B cell (primary cell): ENCODE measurements at regions of chr14 and their contacts with region 1.

Region 1: DNA sequence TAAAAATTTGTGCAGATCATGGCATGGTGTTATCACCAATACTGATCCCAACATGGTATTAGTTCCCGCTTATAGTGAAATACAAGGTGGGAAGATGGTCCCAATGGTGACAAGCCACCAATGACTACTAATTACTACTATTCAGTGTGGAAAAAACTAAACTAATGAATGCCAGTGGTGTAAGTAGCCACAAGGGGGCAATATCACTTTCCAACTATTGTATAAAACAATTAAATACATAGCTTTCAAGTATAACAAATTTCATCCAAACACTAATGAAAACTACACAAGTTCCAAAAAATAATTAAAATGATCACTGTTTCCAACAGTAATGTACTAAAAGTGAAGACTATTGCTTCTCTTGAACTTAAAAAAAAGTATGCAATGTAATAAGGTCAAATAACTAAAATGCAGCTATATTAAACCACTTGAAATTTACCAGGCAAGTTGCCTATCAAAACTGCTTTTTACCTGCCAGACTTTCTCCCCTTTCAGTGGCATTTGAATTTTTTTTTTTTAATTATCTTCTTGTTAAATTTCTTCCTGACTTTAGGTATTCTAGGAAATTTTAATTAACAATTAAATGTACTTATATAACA is 58.0 kb downstream of the PAPLN start:
- DNase-seq: peak; percentile 72
- ATAC-seq: peak; percentile 53
- H3K4me3 ChIP-seq: no peak overlapping the region
- H3K4me3 Mint-ChIP-seq: no peak overlapping the region
- H3K27ac ChIP-seq: no peak overlapping the region
- H3K27ac Mint-ChIP-seq: no peak overlapping the region
- H3K4me1 ChIP-seq: no peaks in the 10 kb centered on the region
- H3K4me1 Mint-ChIP-seq: peaks cover 5% of the 10 kb centered on the region
- H3K27me3 ChIP-seq: no peaks in the 10 kb centered on the region
- H3K27me3 Mint-ChIP-seq: no peaks in the 10 kb centered on the region
- CTCF ChIP-seq: peak; percentile 89

Region 2: GRCh38 chr14:72463291-72463866 is 831.9 kb before region 1 on chr14:
- CTCF ChIA-PET with region 1: no interaction called
- POLR2A ChIA-PET with region 1: no interaction called
- intact Hi-C with region 1: no loop called
- DNase-seq: no peak
- ATAC-seq: no peak
- H3K4me3 ChIP-seq: no peak overlapping the region
- H3K4me3 Mint-ChIP-seq: no peak overlapping the region
- H3K27ac ChIP-seq: no peak overlapping the region
- H3K27ac Mint-ChIP-seq: no peak overlapping the region
- H3K4me1 ChIP-seq: no peaks in the 10 kb centered on the region
- H3K4me1 Mint-ChIP-seq: no peaks in the 10 kb centered on the region
- H3K27me3 ChIP-seq: no peaks in the 10 kb centered on the region
- H3K27me3 Mint-ChIP-seq: peaks cover 26% of the 10 kb centered on the region
- CTCF ChIP-seq: no peak

Region 3: DNA sequence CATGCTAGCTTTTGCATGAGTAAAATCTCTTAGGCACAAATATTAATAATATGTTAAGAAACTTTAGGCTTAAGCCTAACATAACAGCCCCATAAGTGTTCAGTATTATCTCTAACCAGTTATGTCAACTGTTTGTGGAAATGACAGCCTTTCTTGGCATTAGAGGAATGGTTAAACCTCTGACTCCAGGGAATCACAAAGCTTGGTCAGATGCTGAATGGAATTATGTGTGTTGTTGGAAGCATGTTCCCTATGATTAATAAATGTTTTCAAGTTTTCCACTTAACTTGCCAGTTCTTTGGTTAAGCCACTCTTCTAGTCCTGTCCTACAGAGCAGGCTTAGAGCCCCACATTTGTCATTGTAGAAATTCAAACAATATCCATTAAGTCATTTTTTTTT is 142.0 kb before region 1 on chr14:
- CTCF ChIA-PET with region 1: no interaction called
- POLR2A ChIA-PET with region 1: no interaction called
- intact Hi-C with region 1: no loop called
- DNase-seq: no peak
- ATAC-seq: no peak
- H3K4me3 ChIP-seq: no peak overlapping the region
- H3K4me3 Mint-ChIP-seq: no peak overlapping the region
- H3K27ac ChIP-seq: no peak overlapping the region
- H3K27ac Mint-ChIP-seq: no peak overlapping the region
- H3K4me1 ChIP-seq: no peaks in the 10 kb centered on the region
- H3K4me1 Mint-ChIP-seq: no peaks in the 10 kb centered on the region
- H3K27me3 ChIP-seq: no peaks in the 10 kb centered on the region
- H3K27me3 Mint-ChIP-seq: no peaks in the 10 kb centered on the region
- CTCF ChIP-seq: no peak

Region 4: DNA sequence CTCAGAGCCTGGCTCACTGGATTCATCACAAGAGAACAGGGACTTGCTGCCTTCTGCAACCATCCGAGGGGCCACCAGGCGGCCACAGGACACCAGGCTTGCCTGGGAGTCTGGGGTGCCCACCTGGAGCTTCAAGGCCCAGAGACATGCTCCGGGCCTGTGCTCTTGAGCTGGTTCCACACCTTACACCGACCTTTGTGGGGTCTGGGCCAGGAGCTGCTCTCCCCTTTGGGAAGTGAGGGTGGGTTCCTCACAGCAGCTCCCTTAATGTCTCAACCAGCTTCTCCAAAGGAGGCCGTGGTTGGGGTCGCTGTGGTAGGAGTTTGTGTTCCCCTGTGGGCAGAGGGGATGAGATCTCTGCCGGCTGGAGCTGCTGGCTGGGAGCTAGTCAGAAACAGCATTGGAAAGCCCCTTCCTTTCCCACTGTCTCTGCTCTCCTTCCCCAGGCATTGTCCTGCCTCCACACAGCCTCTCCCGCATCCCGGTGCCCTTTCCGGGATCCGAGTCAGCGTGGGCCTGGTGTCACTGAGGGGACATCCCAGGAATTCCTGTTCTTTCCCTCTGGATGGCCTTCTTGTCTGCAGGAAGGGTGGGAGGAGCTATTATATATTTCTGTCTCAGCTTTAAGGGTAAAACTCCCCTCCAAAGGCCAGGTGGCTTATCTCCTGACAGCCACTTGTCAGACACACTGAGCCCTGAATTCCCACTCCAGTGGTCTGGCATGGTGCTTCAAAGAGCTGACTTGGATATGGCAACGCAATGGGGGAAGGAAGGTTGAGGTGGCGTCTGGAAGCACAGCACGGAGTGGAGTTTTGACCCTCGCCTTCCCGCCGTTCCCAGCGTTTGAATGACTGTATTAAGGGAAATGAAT is 63.1 kb before region 1 on chr14:
- CTCF ChIA-PET with region 1: interaction called, 13 read pairs
- POLR2A ChIA-PET with region 1: no interaction called
- intact Hi-C with region 1: no loop called
- DNase-seq: peak; percentile 35
- ATAC-seq: peak; percentile 24
- H3K4me3 ChIP-seq: no peak overlapping the region
- H3K4me3 Mint-ChIP-seq: no peak overlapping the region
- H3K27ac ChIP-seq: no peak overlapping the region
- H3K27ac Mint-ChIP-seq: no peak overlapping the region
- H3K4me1 ChIP-seq: peaks cover 8 to 12% of the 10 kb centered on the region in 2 donors
- H3K4me1 Mint-ChIP-seq: peaks cover 16% of the 10 kb centered on the region
- H3K27me3 ChIP-seq: peaks cover 0 to 49% (median 14%) of the 10 kb centered on the region in 4 experiments
- H3K27me3 Mint-ChIP-seq: peaks cover 33% of the 10 kb centered on the region
- CTCF ChIP-seq: peak; percentile 42

Region 5: GRCh38 chr14:73311708-73312030 is 16.4 kb after region 1 on chr14:
- CTCF ChIA-PET with region 1: interaction called, 14 read pairs
- POLR2A ChIA-PET with region 1: no interaction called
- intact Hi-C with region 1: no loop called
- DNase-seq: no peak
- ATAC-seq: no peak
- H3K4me3 ChIP-seq: no peak overlapping the region
- H3K4me3 Mint-ChIP-seq: no peak overlapping the region
- H3K27ac ChIP-seq: peak overlapping the region in 1 of 2 donors; percentile 31
- H3K27ac Mint-ChIP-seq: peak overlapping the region; percentile 34
- H3K4me1 ChIP-seq: peaks cover 8 to 12% of the 10 kb centered on the region in 2 donors
- H3K4me1 Mint-ChIP-seq: peaks cover 12% of the 10 kb centered on the region
- H3K27me3 ChIP-seq: no peaks in the 10 kb centered on the region
- H3K27me3 Mint-ChIP-seq: no peaks in the 10 kb centered on the region
- CTCF ChIP-seq: no peak

Region 6: DNA sequence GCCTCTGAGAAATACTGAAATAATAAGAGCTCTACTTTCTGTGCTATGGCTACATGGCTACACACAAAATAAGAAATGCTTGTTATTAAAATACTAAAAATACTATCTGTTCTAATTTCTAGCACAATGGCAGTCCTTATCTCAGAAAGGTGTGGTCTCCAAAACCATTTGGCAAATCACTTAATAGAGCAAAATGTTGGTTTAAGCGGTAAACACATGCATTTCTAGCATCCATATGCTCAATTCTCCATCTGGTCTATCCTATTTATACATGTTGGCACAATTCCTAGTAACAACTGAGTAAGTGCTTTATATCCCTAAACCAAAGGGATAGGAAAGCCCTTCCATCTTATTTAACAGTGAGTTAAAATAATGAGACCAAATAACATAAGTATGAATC is 49.0 kb after region 1 on chr14:
- CTCF ChIA-PET with region 1: interaction called, 10 read pairs
- POLR2A ChIA-PET with region 1: no interaction called
- intact Hi-C with region 1: no loop called
- DNase-seq: no peak
- ATAC-seq: no peak
- H3K4me3 ChIP-seq: no peak overlapping the region
- H3K4me3 Mint-ChIP-seq: no peak overlapping the region
- H3K27ac ChIP-seq: no peak overlapping the region
- H3K27ac Mint-ChIP-seq: no peak overlapping the region
- H3K4me1 ChIP-seq: no peaks in the 10 kb centered on the region
- H3K4me1 Mint-ChIP-seq: peaks cover 6% of the 10 kb centered on the region
- H3K27me3 ChIP-seq: no peaks in the 10 kb centered on the region
- H3K27me3 Mint-ChIP-seq: no peaks in the 10 kb centered on the region
- CTCF ChIP-seq: no peak

Region 7: DNA sequence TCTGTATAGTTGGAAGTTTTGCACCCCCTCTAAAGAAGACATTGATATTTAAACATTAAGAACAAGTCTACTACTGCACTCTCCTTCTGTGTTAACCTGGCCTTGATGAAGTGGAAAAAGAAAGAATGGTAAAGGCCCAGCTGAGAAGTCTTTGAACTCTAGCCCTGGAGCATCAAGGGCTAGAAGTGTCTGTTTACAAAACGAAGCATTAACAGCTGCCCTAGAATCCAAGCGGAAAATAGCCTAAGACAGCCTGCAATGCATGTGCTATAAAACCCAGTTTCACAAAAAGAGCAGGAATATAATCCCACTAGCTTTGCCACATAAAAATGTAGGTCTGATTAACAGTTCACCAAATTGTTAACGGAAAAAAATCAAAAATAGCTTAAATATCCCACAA is 102.5 kb after region 1 on chr14:
- CTCF ChIA-PET with region 1: interaction called, 24 read pairs
- POLR2A ChIA-PET with region 1: no interaction called
- intact Hi-C with region 1: no loop called
- DNase-seq: no peak
- ATAC-seq: no peak
- H3K4me3 ChIP-seq: no peak overlapping the region
- H3K4me3 Mint-ChIP-seq: no peak overlapping the region
- H3K27ac ChIP-seq: no peak overlapping the region
- H3K27ac Mint-ChIP-seq: peak overlapping the region; percentile 0
- H3K4me1 ChIP-seq: peaks cover 29 to 46% of the 10 kb centered on the region in 2 donors
- H3K4me1 Mint-ChIP-seq: peaks cover 51% of the 10 kb centered on the region
- H3K27me3 ChIP-seq: no peaks in the 10 kb centered on the region
- H3K27me3 Mint-ChIP-seq: no peaks in the 10 kb centered on the region
- CTCF ChIP-seq: no peak

Region 8: DNA sequence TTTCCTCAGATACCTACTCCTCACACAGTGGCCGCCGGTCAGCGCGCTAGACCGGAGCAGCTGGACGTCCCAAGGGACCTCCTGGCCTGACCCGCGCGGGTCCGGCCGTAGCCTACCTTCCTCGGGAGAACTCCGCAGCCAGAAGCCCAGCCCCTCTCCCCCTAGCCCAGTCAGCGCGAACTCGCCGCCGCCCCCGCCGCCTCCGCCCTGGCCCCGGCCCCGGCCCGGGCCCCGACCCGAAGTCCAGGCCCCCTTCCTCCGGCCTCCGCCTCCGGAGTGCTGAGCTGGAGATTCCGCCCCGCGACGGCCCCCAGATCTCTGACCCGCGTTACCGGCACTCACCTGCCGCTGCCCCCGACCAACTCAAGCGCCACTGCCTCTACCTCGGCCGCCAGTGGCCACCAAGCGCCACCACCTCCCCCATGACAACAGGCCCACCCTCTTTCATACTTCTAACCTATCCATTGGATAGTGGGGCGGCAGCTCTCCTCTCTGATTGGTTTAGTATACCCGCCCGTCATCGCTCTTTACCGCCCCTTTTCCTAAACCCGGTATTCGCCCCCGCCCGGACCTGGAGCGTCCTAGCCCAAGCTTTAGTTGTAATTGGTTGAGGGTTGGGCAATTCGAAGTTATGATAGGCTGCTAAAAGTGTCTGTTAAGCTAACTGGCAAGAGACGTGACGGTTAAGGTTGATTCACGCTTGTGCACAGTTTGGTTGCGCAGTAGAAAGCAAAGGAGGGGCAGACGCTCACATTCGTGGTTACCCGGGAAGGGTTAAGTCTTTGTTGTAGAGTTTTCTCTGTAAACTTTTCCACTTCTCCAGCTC is 163.1 kb after region 1 on chr14 and contains the start of gene NUMB:
- CTCF ChIA-PET with region 1: interaction called, 470 read pairs
- POLR2A ChIA-PET with region 1: interaction called, 5 read pairs
- intact Hi-C with region 1: no loop called
- DNase-seq: peak; percentile 99
- ATAC-seq: peak; percentile 97
- H3K4me3 ChIP-seq: peak within 1 kb of the TSS; percentile 74 to 97 (median 95)
- H3K4me3 Mint-ChIP-seq: peak within 1 kb of the TSS; percentile 96
- H3K27ac ChIP-seq: peak within 1 kb of the TSS; percentile 74 to 91
- H3K27ac Mint-ChIP-seq: peak within 1 kb of the TSS; percentile 95
- H3K4me1 ChIP-seq: peaks cover 23 to 34% of the 10 kb centered on the region in 2 donors
- H3K4me1 Mint-ChIP-seq: peaks cover 53% of the 10 kb centered on the region
- H3K27me3 ChIP-seq: no peaks in the 10 kb centered on the region
- H3K27me3 Mint-ChIP-seq: no peaks in the 10 kb centered on the region
- CTCF ChIP-seq: no peak
- total RNA-seq, gene NUMB: 102 and 108 TPM in 2 replicates